AG04449 (cell line): ENCODE measurements at regions of chr1 and their contacts with region 1.

Region 1: DNA sequence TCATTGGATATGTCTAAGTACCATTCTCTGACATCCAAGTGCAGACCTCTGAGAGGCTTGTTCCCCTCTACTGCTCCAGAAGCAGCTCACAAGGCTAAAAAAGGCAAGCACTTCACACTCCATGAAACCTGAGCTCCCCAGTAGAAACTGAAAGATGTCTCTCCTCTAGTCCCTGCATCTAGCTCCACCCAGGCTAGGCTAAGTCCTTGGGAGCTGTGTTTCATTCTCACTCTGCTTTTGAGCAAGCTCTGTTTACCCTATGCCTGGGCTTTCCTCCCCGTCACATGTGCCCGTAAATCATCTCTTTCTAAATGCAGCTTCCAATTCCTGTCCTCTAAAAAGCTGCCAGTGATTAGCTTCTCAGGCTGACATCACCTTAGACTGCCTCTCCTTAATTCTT is 39.0 kb downstream of the LRRC71 start:
- DNase-seq: peak; percentile 47
- H3K4me3 ChIP-seq: no peak overlapping the region
- CTCF ChIP-seq: no peak

Region 2: GRCh38 chr1:156970017-156970416 is 10.6 kb after region 1 on chr1:
- CTCF ChIA-PET with region 1: interaction called, 10 read pairs
- POLR2A ChIA-PET with region 1: no interaction called
- DNase-seq: no peak
- H3K4me3 ChIP-seq: no peak overlapping the region
- CTCF ChIP-seq: peak; percentile 22

Region 3: GRCh38 chr1:157117527-157118057 is 158.2 kb after region 1 on chr1:
- CTCF ChIA-PET with region 1: no interaction called
- POLR2A ChIA-PET with region 1: no interaction called
- DNase-seq: no peak
- H3K4me3 ChIP-seq: no peak overlapping the region
- CTCF ChIP-seq: no peak